Endothelial cell of umbilical vein (primary cell): ENCODE measurements at regions of chr1 and their contacts with region 1.

Region 1: DNA sequence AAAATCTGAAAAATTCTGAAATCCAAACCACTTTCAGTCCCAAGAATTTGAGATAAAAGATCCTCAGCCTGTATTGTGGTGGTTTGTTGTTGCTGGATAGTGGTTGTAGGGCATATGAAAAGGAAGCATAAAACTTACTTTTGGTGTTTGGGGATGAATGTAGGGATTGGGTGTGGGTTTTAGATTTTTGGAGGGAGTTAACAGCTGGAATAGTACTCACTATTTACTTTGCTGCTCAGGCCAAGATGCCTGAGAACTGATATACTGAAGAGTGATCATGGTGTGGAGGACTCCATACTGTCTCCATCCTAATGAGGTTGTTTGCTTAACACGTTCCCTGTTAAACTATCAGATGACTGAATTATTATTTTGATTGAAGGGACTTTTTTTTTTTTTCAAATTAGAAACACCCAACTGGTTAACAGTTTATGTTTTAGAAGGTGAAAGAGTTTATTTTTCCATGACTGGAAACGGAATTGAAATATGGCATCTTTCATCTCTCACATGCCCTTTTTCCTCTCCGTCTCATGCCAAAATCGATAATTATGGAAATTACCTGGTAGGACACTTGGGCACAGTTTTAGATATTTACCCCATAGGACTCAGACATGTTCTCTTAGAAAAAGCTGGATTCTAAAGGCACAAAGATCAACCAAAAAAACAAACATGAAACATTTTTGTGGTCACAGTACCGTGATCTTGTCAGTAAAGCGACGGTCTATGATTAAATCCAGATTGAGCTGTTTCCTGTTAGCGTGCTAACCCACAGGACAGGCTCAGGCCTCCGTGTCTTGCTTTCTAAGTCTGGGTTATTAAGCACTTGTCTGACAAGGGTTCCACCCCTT is 37.3 kb downstream of the RGL1 start:
- DNase-seq: peak; percentile 80
- H3K4me3 ChIP-seq: peak overlapping the region in 1 of 3 experiments; percentile 28
- H3K27ac ChIP-seq: peak overlapping the region; percentile 74
- H3K4me1 ChIP-seq: peaks cover 53% of the 10 kb centered on the region
- H3K27me3 ChIP-seq: no peaks in the 10 kb centered on the region
- CTCF ChIP-seq: no peak
- POLR2A ChIP-seq: no peak

Region 2: GRCh38 chr1:183817576-183818288 is 24.4 kb before region 1 on chr1:
- CTCF ChIA-PET with region 1: interaction called, 8 read pairs
- POLR2A ChIA-PET with region 1: no interaction called
- dilution Hi-C with region 1: no loop called
- intact Hi-C with region 1: loop called (anchors 1 kb)
- DNase-seq: peak; percentile 63
- H3K4me3 ChIP-seq: no peak overlapping the region
- H3K27ac ChIP-seq: no peak overlapping the region
- H3K4me1 ChIP-seq: peaks cover 38% of the 10 kb centered on the region
- H3K27me3 ChIP-seq: no peaks in the 10 kb centered on the region
- CTCF ChIP-seq: no peak
- POLR2A ChIP-seq: no peak

Region 3: DNA sequence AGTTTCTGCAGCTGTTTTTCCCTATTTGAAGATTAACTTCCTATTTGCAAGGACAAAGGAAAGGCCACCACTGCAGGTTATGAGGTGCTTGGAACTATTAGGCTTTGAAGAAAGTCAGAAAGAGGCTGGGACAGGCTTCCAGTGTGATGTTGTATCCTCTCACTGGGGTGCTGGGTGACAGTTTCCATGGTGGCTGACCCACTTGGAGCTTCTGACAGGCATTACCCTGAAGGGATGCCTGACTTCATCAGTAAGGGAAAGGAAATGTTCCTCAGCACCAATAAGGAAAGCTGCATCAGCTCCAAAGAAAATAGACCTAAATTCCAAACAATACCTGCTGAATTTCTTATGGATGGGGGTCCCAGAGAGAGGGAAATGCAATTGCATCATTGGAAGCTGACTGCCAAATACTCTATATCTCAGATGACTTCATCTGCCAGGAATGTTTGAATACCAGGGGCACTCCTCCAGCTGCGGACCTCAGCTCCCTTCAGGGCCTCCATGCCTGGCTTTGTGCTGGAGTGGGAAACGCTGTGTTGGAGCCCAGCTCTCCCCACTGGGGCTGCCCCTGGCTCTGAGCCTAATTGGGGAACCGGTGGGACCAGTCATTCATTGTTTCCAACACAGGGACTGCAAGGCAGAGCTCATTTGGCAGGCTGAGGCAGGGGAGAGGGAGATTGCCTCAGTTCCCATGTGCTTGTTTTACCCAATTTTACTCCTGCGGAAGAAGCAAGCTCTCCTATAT is 39.4 kb after region 1 on chr1:
- CTCF ChIA-PET with region 1: interaction called, 4 read pairs
- POLR2A ChIA-PET with region 1: interaction called, 3 read pairs
- dilution Hi-C with region 1: no loop called
- intact Hi-C with region 1: loop called (anchors 2 kb)
- DNase-seq: peak; percentile 98
- H3K4me3 ChIP-seq: no peak overlapping the region
- H3K27ac ChIP-seq: peak overlapping the region; percentile 77
- H3K4me1 ChIP-seq: peaks cover 43% of the 10 kb centered on the region
- H3K27me3 ChIP-seq: no peaks in the 10 kb centered on the region
- CTCF ChIP-seq: no peak
- POLR2A ChIP-seq: peak; percentile 56

Region 4: GRCh38 chr1:183891158-183891856 is 49.1 kb after region 1 on chr1:
- CTCF ChIA-PET with region 1: interaction called, 7 read pairs
- POLR2A ChIA-PET with region 1: no interaction called
- dilution Hi-C with region 1: no loop called
- intact Hi-C with region 1: loop called (anchors 1 kb)
- DNase-seq: no peak
- H3K4me3 ChIP-seq: no peak overlapping the region
- H3K27ac ChIP-seq: no peak overlapping the region
- H3K4me1 ChIP-seq: peaks cover 26% of the 10 kb centered on the region
- H3K27me3 ChIP-seq: no peaks in the 10 kb centered on the region
- CTCF ChIP-seq: no peak
- POLR2A ChIP-seq: no peak